Naive thymus-derived CD4-positive, alpha-beta T cell (primary cell): ENCODE measurements at regions of chr12 and their contacts with region 1.

Region 1: DNA sequence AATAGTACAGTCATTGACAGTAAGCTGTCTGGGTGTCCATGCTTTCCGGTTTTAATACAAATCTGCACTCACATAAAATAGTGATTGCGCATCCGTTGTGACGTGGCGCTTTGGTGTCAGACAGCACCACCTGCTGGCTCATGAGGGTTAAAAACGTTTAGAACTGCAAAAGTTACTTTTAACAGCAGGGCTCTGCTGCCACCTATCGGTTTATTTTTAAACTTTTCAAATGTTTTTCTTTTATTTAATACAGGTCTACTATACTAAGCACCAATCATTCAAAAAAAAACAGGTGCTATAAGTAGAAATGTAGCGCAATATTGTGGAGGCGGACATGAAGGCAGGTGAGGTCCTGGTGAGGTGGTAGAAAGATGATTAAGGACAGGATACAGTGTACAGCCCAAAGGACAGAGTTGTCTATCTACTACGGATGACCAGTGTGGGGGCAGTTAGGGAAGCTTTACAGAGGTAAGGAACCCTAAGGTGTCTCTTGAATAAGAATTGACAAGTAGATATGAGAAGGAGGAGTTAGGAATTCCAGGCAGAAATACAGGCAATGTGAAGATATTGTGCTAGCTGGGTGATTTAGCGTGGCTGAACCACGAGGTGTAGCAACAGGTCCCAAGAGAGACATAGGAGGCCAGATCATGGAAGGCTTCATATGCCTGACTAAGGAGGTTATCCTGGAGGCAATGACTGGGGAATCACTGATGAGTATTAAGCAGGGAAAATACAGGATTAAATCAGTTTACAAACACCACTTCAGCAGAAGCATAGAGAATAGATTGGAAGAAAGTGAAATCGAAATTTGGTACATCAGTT is 91.5 kb upstream of the PRB2 start:
- DNase-seq: peak; percentile 44 to 85 (median 78)
- ATAC-seq: peak; percentile 99
- H3K4me3 ChIP-seq: no peak overlapping the region
- H3K4me3 Mint-ChIP-seq: peak overlapping the region in 3 of 10 donors; percentile 24 to 54 (median 28)
- H3K27ac ChIP-seq: no peak overlapping the region
- H3K27ac Mint-ChIP-seq: peak overlapping the region in 1 of 9 donors; percentile 37
- H3K4me1 ChIP-seq: no peaks in the 10 kb centered on the region
- H3K4me1 Mint-ChIP-seq: peaks cover 0 to 9% (median 7%) of the 10 kb centered on the region in 7 donors
- H3K27me3 ChIP-seq: no peaks in the 10 kb centered on the region
- H3K27me3 Mint-ChIP-seq: peaks cover 0 to 11% (median 0%) of the 10 kb centered on the region in 5 donors

Region 2: GRCh38 chr12:10153271-10154144 is 1333.3 kb before region 1 on chr12:
- CTCF ChIA-PET with region 1: no interaction called
- POLR2A ChIA-PET with region 1: no interaction called
- intact Hi-C with region 1: loop called (anchors 1 kb)
- DNase-seq: peak; percentile 31 to 71 (median 58)
- ATAC-seq: peak; percentile 93
- H3K4me3 ChIP-seq: peak overlapping the region; percentile 83
- H3K4me3 Mint-ChIP-seq: peak overlapping the region; percentile 89 to 96 (median 93)
- H3K27ac ChIP-seq: peak overlapping the region; percentile 55
- H3K27ac Mint-ChIP-seq: peak overlapping the region in 7 of 9 donors; percentile 58 to 91 (median 82)
- H3K4me1 ChIP-seq: peaks cover 6 to 7% of the 10 kb centered on the region in 2 donors
- H3K4me1 Mint-ChIP-seq: peaks cover 5 to 15% (median 11%) of the 10 kb centered on the region in 7 donors
- H3K27me3 ChIP-seq: peaks cover 0 to 3% of the 10 kb centered on the region in 2 donors
- H3K27me3 Mint-ChIP-seq: peaks cover 0 to 66% (median 0%) of the 10 kb centered on the region in 5 donors

Region 3: DNA sequence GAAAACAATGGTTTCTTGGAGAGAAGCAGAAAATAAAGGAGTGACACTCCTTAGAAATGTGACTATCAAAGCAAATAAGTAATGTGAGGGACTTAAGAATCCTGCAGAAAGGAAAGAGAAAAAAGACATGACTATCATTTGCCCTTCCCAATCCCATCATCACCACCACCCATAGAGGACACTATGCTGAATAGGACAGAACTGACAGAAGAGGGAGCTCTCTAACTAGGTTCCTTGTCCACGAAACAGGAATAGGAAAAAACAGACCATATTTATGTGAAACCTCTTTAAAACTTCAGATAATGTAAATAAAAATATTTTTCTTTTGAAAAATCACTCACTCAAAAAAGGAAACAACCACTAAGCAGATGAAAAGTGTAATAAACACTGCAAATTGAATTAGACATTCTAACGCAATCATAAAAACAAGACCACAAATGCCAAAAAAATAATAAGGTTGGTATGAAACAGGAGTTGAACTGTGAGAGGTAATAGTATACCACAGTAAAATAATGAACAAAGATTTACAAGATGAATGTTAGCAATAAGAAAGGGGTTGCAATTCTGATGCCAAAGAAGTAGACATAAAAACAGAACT is 1155.1 kb before region 1 on chr12:
- CTCF ChIA-PET with region 1: no interaction called
- POLR2A ChIA-PET with region 1: no interaction called
- intact Hi-C with region 1: loop called in 1 of 2 experiments (anchors 5 kb)
- DNase-seq: peak in 7 of 9 donors; percentile 9 to 51 (median 20)
- ATAC-seq: peak; percentile 63
- H3K4me3 ChIP-seq: no peak overlapping the region
- H3K4me3 Mint-ChIP-seq: no peak overlapping the region
- H3K27ac ChIP-seq: no peak overlapping the region
- H3K27ac Mint-ChIP-seq: peak overlapping the region in 1 of 9 donors; percentile 57
- H3K4me1 ChIP-seq: no peaks in the 10 kb centered on the region
- H3K4me1 Mint-ChIP-seq: peaks cover 0 to 6% (median 0%) of the 10 kb centered on the region in 7 donors
- H3K27me3 ChIP-seq: no peaks in the 10 kb centered on the region
- H3K27me3 Mint-ChIP-seq: peaks cover 0 to 6% (median 0%) of the 10 kb centered on the region in 5 donors

Region 4: GRCh38 chr12:10613349-10614055 is 873.3 kb before region 1 on chr12 and contains the start of gene MAGOHB:
- CTCF ChIA-PET with region 1: no interaction called
- POLR2A ChIA-PET with region 1: interaction called, 3 read pairs
- intact Hi-C with region 1: loop called in 1 of 2 experiments (anchors 5 kb)
- DNase-seq: peak; percentile 94 to 100 (median 97)
- ATAC-seq: peak; percentile 96
- H3K4me3 ChIP-seq: peak within 1 kb of the TSS; percentile 74
- H3K4me3 Mint-ChIP-seq: peak within 1 kb of the TSS; percentile 93 to 100 (median 98)
- H3K27ac ChIP-seq: peak within 1 kb of the TSS; percentile 93
- H3K27ac Mint-ChIP-seq: peak within 1 kb of the TSS; percentile 97 to 100 (median 100)
- H3K4me1 ChIP-seq: peaks cover 4 to 11% of the 10 kb centered on the region in 2 donors
- H3K4me1 Mint-ChIP-seq: peaks cover 12 to 38% (median 33%) of the 10 kb centered on the region in 7 donors
- H3K27me3 ChIP-seq: no peaks in the 10 kb centered on the region
- H3K27me3 Mint-ChIP-seq: peaks cover 0 to 26% (median 7%) of the 10 kb centered on the region in 5 donors
- total RNA-seq, gene MAGOHB: 12.1 to 43.1 (median 24.8) TPM

Region 5: GRCh38 chr12:10771132-10771733 is 715.6 kb before region 1 on chr12:
- CTCF ChIA-PET with region 1: interaction called, 35 read pairs
- POLR2A ChIA-PET with region 1: no interaction called
- intact Hi-C with region 1: loop called (anchors 1 kb)
- DNase-seq: peak in 7 of 9 donors; percentile 9 to 56 (median 45)
- ATAC-seq: peak; percentile 63
- H3K4me3 ChIP-seq: no peak overlapping the region
- H3K4me3 Mint-ChIP-seq: no peak overlapping the region
- H3K27ac ChIP-seq: no peak overlapping the region
- H3K27ac Mint-ChIP-seq: no peak overlapping the region
- H3K4me1 ChIP-seq: no peaks in the 10 kb centered on the region
- H3K4me1 Mint-ChIP-seq: no peaks in the 10 kb centered on the region
- H3K27me3 ChIP-seq: no peaks in the 10 kb centered on the region
- H3K27me3 Mint-ChIP-seq: peaks cover 41 to 56% (median 52%) of the 10 kb centered on the region in 5 donors

Region 6: GRCh38 chr12:11067514-11067913 is 419.3 kb before region 1 on chr12:
- CTCF ChIA-PET with region 1: no interaction called
- POLR2A ChIA-PET with region 1: no interaction called
- intact Hi-C with region 1: loop called in 1 of 2 experiments (anchors 10 kb)
- DNase-seq: no peak
- ATAC-seq: no peak
- H3K4me3 ChIP-seq: no peak overlapping the region
- H3K4me3 Mint-ChIP-seq: no peak overlapping the region
- H3K27ac ChIP-seq: no peak overlapping the region
- H3K27ac Mint-ChIP-seq: no peak overlapping the region
- H3K4me1 ChIP-seq: no peaks in the 10 kb centered on the region
- H3K4me1 Mint-ChIP-seq: peaks cover 0 to 23% (median 14%) of the 10 kb centered on the region in 7 donors
- H3K27me3 ChIP-seq: no peaks in the 10 kb centered on the region
- H3K27me3 Mint-ChIP-seq: no peaks in the 10 kb centered on the region

Region 7: DNA sequence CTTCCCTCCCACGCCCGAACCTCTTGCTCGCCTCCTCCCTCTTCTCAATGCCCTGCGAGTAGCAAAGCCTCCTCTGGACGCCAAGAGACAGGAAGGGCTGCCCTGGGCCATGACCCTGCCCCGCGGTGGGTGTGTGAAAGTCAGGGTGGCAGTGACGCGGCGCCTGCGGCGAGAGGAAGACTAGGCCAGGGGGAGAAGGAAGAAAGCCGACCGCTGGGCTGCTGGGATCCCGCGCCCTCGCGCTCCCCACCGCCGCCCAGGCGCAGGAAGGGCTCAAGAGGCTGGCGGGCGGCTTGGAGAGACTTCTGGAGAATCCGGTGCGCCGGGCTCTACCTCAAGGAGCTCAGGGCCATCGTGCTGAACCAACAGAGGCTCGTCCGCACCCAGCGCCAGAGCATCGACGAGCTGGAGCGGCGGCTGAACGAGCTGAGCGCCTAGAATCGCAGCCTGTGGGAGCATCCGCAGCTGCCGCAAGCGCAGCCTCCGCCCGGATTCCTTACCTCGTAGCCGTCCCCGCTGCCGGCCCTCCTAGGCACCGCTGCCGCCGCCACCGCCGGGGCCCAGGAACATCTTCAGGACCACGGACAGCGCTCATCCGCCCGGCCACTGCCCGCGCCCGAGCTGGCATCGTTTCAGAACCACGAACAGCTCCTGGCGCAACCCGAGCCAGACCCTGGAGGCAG is 13.5 kb after region 1 on chr12:
- CTCF ChIA-PET with region 1: interaction called, 10 read pairs
- POLR2A ChIA-PET with region 1: no interaction called
- intact Hi-C with region 1: no loop called
- DNase-seq: peak; percentile 63 to 89 (median 76)
- ATAC-seq: peak; percentile 95
- H3K4me3 ChIP-seq: no peak overlapping the region
- H3K4me3 Mint-ChIP-seq: no peak overlapping the region
- H3K27ac ChIP-seq: no peak overlapping the region
- H3K27ac Mint-ChIP-seq: peak overlapping the region in 5 of 9 donors; percentile 26 to 60 (median 38)
- H3K4me1 ChIP-seq: no peaks in the 10 kb centered on the region
- H3K4me1 Mint-ChIP-seq: peaks cover 0 to 6% (median 0%) of the 10 kb centered on the region in 7 donors
- H3K27me3 ChIP-seq: no peaks in the 10 kb centered on the region
- H3K27me3 Mint-ChIP-seq: peaks cover 22 to 40% (median 25%) of the 10 kb centered on the region in 5 donors

Region 8: DNA sequence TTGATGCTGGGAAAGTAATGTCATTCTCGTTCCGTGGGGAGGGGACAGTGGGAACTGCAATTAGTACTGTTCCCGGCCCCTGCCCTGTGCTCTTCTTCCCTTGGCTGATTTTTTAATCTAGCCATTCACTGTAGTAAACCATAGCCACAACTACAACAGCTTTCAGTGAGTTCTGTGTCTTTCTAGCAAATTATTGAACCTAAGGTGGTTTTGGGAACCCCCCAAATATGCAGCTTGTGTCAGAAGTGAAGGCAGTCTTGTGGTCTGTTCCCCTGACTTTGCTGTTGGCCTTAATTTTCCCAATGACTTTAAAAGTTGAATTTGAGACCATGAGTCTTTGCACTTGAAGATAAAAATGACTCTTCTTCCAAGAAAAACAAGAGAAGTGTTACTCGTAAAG is 48.3 kb after region 1 on chr12:
- CTCF ChIA-PET with region 1: no interaction called
- POLR2A ChIA-PET with region 1: no interaction called
- intact Hi-C with region 1: no loop called
- DNase-seq: no peak
- ATAC-seq: no peak
- H3K4me3 ChIP-seq: no peak overlapping the region
- H3K4me3 Mint-ChIP-seq: no peak overlapping the region
- H3K27ac ChIP-seq: no peak overlapping the region
- H3K27ac Mint-ChIP-seq: no peak overlapping the region
- H3K4me1 ChIP-seq: no peaks in the 10 kb centered on the region
- H3K4me1 Mint-ChIP-seq: peaks cover 0 to 6% (median 1%) of the 10 kb centered on the region in 7 donors
- H3K27me3 ChIP-seq: no peaks in the 10 kb centered on the region
- H3K27me3 Mint-ChIP-seq: peaks cover 0 to 33% (median 0%) of the 10 kb centered on the region in 5 donors